Activated CD8-positive, alpha-beta T cell treated with anti-CD3 and anti-CD28 coated beads for 36 hours (primary cell): ENCODE measurements at regions of chr6 and their contacts with region 1.

Region 1: DNA sequence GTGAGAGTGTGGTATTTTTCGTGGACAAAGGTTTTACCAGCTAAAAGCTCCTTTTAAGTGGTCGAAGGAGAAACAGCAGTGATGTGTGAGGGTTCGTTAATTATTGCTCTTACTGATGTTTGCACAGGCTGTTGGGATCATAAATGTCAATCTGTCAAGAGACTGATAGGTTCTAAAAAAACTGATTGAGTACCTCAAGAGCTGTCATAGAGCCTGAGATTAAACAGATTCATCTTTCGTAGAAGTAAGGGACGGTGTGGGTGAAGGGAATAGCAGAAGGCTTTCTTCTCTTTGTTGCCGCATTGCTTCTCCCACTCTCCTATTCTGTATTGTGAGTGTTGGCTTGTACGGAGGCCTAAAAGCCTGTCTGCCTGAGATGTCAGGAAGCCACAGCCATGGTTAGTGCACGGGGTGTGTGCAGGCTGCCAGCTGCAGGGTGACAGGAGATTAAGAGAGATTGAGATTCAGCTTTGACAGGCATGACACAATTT is 291.0 kb downstream of the ZFAND3 start:
- DNase-seq: no peak
- ATAC-seq: no peak
- H3K4me3 Mint-ChIP-seq: no peak overlapping the region
- H3K27ac Mint-ChIP-seq: no peak overlapping the region
- H3K4me1 Mint-ChIP-seq: peaks cover 24% of the 10 kb centered on the region
- H3K27me3 Mint-ChIP-seq: no peaks in the 10 kb centered on the region
- CTCF ChIP-seq: no peak

Region 2: GRCh38 chr6:38100380-38100779 is 10.1 kb before region 1 on chr6:
- CTCF ChIA-PET with region 1: interaction called, 10 read pairs
- POLR2A ChIA-PET with region 1: interaction called, 4 read pairs
- intact Hi-C with region 1: no loop called
- DNase-seq: no peak
- ATAC-seq: no peak
- H3K4me3 Mint-ChIP-seq: no peak overlapping the region
- H3K27ac Mint-ChIP-seq: no peak overlapping the region
- H3K4me1 Mint-ChIP-seq: peaks cover 7% of the 10 kb centered on the region
- H3K27me3 Mint-ChIP-seq: no peaks in the 10 kb centered on the region
- CTCF ChIP-seq: no peak